Activated CD8-positive, alpha-beta T cell treated with anti-CD3 and anti-CD28 coated beads for 36 hours (primary cell): ENCODE measurements at regions of chr19 and their contacts with region 1.

Region 1: GRCh38 chr19:45817010-45817724 is 2.1 kb upstream of the RSPH6A start:
- DNase-seq: peak; percentile 98
- ATAC-seq: peak; percentile 99
- H3K4me3 Mint-ChIP-seq: no peak overlapping the region
- H3K27ac Mint-ChIP-seq: no peak overlapping the region
- H3K4me1 Mint-ChIP-seq: peaks cover 2% of the 10 kb centered on the region
- H3K27me3 Mint-ChIP-seq: no peaks in the 10 kb centered on the region
- CTCF ChIP-seq: peak; percentile 100

Region 2: DNA sequence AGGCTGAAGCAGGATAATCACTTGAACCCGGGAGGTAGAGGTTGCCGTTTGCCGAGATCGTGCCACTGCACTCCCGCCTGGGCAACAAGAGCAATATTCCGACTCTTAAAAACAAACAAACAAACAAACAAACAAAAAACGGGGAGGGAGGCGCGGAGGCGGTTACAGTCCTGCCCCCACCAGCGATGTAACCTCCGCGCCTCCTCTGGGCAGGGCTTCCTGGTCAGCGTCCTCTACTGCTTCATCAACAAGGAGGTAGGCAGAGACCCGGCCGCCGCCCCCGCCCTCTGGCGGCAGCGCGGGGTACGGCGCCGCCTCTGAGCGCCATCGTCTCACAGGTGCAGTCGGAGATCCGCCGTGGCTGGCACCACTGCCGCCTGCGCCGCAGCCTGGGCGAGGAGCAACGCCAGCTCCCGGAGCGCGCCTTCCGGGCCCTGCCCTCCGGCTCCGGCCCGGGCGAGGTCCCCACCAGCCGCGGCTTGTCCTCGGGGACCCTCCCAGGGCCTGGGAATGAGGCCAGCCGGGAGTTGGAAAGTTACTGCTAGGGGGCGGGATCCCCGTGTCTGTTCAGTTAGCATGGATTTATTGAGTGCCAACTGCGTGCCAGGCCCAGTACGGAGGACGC is 135.7 kb before region 1 on chr19:
- CTCF ChIA-PET with region 1: no interaction called
- POLR2A ChIA-PET with region 1: no interaction called
- intact Hi-C with region 1: no loop called
- DNase-seq: peak; percentile 91
- ATAC-seq: peak; percentile 79
- H3K4me3 Mint-ChIP-seq: peak overlapping the region; percentile 67
- H3K27ac Mint-ChIP-seq: peak overlapping the region; percentile 46
- H3K4me1 Mint-ChIP-seq: peaks cover 17% of the 10 kb centered on the region
- H3K27me3 Mint-ChIP-seq: peaks cover 3% of the 10 kb centered on the region
- CTCF ChIP-seq: peak; percentile 99

Region 3: DNA sequence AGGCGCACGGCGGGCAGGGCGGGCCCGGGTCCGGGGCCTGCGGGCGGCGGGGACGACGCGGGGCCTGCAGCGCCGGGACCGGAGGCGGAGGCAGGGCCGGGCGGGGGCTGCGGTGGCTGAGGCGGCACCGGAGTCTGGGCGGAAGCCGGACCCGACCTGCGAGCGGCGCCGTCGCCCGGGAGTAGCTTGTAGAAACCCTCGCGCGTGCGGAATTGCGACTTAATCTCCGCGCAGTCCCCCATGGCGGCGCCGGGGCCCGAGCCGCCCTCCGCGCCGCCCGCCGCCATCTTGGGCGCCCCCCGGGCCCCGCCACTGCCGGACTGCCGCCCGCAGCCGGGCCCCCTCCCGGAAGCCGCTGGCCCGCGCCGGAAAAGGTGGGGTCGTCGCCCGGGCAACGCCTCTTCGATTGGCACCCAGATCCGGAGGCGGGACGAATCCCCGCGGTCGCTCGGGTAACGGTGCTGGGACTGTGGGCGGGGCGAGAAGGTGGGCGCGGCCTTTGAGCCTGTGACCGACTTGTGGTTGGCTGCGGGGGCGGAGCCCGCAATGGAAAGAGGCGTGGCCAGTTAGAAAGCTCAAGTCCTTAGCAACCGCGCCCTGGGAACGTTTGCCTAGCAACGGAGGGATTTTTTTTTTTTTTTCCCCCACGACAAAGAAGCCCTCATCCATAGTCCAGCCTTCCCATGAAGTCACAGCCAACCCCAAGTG is 24.5 kb before region 1 on chr19 and contains the start of gene DMWD:
- CTCF ChIA-PET with region 1: interaction called, 18 read pairs
- POLR2A ChIA-PET with region 1: interaction called, 8 read pairs
- intact Hi-C with region 1: no loop called
- DNase-seq: peak; percentile 100
- ATAC-seq: peak; percentile 95
- H3K4me3 Mint-ChIP-seq: peak within 1 kb of the TSS; percentile 93
- H3K27ac Mint-ChIP-seq: peak within 1 kb of the TSS; percentile 87
- H3K4me1 Mint-ChIP-seq: peaks cover 28% of the 10 kb centered on the region
- H3K27me3 Mint-ChIP-seq: peaks cover 29% of the 10 kb centered on the region
- CTCF ChIP-seq: no peak
- total RNA-seq, gene DMWD: 23.5 to 26.0 TPM

Region 4: DNA sequence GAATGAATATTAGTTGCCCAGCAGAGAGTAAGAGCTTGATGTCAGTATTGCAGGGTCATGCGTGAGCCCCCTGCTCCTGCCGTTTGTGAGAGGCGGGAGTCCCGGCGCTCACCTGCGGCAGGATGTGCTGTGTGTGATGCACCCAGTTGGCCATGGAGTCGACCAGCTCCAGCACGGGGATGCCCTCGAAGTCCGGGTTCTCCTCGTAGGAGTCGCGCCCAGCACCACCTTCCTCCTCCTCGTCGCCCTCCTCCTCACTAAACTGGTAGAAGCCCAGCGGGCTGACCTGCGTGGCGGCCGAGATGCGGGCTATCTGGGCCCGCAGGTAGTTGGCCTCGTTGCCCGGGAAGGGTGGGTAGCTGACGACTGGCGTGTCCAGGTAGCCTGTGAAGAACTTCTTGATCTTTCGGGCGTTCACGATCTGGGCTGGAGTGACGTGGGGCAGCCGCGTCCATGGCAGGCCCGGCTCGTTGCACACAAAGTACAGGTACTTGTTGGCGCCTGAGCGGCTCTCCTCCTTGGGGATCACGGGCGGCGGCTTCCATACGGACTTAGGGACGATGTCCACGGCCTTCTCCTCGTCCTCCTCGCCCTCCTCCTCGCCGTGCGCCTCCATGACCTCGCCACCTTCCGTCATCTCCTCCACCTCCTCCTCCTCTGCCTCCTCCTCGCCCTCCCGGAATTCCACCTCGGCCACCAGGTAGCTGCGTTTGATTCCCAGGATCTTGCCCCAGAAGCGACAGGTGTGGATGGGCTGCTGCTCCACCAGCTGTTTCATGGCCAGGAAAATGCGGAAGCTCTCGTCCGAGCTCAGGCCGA is 12.8 kb before region 1 on chr19:
- CTCF ChIA-PET with region 1: interaction called, 37 read pairs
- POLR2A ChIA-PET with region 1: interaction called, 4 read pairs
- intact Hi-C with region 1: no loop called
- DNase-seq: no peak
- ATAC-seq: no peak
- H3K4me3 Mint-ChIP-seq: no peak overlapping the region
- H3K27ac Mint-ChIP-seq: no peak overlapping the region
- H3K4me1 Mint-ChIP-seq: peaks cover under 1% of the 10 kb centered on the region
- H3K27me3 Mint-ChIP-seq: peaks cover 1% of the 10 kb centered on the region
- CTCF ChIP-seq: no peak

Region 5: DNA sequence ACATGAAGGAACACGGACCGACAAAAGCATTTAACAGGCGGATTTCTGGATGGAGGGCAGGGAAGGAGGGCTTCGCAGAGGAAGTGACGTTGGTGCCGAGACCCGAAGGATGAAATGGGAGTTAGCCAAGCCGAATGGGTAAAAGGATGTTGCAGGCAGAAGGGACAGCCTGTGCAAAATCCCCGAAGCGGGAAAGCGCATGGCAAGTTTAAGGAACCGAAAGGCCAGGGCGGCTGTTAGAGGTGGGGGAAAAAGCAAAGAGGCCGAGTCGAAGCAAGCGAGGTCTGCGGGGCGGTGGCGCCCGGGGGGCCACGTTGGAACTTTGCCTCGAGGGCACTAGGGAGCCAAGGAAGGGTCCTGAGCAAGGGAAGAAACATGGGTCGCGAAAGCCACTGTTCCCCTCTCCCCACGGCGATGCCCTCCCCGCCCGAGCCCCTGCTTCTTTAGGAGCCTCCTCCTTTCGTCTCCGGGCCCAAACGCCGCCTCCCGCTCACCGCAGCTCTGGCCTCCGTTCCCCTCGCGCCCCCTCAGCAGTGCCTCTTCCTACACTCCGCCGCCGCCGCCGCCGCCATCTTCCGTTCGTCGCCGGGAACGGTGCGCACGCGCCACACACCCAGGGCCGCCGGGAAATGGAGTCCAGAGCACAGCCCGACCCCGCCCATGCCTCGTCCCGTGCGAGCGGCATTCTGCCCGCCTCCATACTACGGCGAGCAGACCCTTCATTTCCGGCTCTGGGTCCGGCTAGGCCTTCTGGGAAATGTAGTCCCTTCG is 45.6 kb after region 1 on chr19 and contains the start of gene SYMPK:
- CTCF ChIA-PET with region 1: interaction called, 11 read pairs
- POLR2A ChIA-PET with region 1: no interaction called
- intact Hi-C with region 1: no loop called
- DNase-seq: peak; percentile 99
- ATAC-seq: peak; percentile 98
- H3K4me3 Mint-ChIP-seq: peak within 1 kb of the TSS; percentile 85
- H3K27ac Mint-ChIP-seq: peak within 1 kb of the TSS; percentile 98
- H3K4me1 Mint-ChIP-seq: peaks cover 25% of the 10 kb centered on the region
- H3K27me3 Mint-ChIP-seq: peaks cover 25% of the 10 kb centered on the region
- CTCF ChIP-seq: no peak
- total RNA-seq, gene SYMPK: 96.8 to 114 TPM

Region 6: GRCh38 chr19:45913874-45914830 is 97.0 kb after region 1 on chr19 and contains the start of gene NANOS2:
- CTCF ChIA-PET with region 1: no interaction called
- POLR2A ChIA-PET with region 1: no interaction called
- intact Hi-C with region 1: no loop called
- DNase-seq: peak; percentile 33
- ATAC-seq: no peak
- H3K4me3 Mint-ChIP-seq: no peak within 1 kb of the TSS
- H3K27ac Mint-ChIP-seq: no peak within 1 kb of the TSS
- H3K4me1 Mint-ChIP-seq: peaks cover 4% of the 10 kb centered on the region
- H3K27me3 Mint-ChIP-seq: peaks cover 19% of the 10 kb centered on the region
- CTCF ChIP-seq: peak; percentile 38
- total RNA-seq, gene NANOS2: not detected

Region 7: DNA sequence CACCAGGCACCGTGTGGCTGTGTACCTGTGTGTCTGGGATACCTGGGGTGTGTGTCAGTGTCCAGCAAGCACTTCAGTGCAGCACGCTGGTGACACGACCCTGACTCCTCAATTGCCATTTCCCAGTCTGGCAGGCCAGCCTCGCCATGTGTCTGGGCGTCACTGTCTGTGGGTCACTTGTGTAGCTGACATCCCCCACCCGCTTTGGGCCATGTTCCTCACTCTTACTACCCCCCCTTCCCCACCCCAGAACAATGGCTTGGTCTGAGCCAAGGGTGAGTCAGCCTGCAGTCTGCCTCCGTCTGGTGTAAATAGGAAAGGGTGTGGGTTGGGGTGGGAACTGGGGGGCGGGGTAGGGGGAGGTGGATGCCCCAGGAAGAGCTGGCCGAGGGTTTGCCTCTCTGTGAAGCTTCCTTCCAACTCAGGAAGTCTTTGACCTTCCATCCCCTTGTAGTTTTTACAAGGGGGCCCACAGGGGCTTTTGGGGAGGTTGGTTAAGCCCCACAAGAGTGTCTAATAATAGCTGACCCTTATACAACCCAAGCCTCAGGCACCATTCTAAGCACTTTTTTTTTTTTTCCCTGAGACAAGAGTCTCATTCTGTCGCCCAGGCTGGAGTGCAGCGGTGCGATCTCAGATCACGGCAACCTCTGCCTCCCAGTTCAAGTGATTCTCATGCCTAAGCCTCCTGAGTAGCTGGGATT is 138.9 kb after region 1 on chr19:
- CTCF ChIA-PET with region 1: no interaction called
- POLR2A ChIA-PET with region 1: no interaction called
- intact Hi-C with region 1: no loop called
- DNase-seq: no peak
- ATAC-seq: no peak
- H3K4me3 Mint-ChIP-seq: no peak overlapping the region
- H3K27ac Mint-ChIP-seq: no peak overlapping the region
- H3K4me1 Mint-ChIP-seq: peaks cover 6% of the 10 kb centered on the region
- H3K27me3 Mint-ChIP-seq: peaks cover 46% of the 10 kb centered on the region
- CTCF ChIP-seq: no peak